ENCODE measurements at regions of chr12 and their contacts with region 1.

Region 1: DNA sequence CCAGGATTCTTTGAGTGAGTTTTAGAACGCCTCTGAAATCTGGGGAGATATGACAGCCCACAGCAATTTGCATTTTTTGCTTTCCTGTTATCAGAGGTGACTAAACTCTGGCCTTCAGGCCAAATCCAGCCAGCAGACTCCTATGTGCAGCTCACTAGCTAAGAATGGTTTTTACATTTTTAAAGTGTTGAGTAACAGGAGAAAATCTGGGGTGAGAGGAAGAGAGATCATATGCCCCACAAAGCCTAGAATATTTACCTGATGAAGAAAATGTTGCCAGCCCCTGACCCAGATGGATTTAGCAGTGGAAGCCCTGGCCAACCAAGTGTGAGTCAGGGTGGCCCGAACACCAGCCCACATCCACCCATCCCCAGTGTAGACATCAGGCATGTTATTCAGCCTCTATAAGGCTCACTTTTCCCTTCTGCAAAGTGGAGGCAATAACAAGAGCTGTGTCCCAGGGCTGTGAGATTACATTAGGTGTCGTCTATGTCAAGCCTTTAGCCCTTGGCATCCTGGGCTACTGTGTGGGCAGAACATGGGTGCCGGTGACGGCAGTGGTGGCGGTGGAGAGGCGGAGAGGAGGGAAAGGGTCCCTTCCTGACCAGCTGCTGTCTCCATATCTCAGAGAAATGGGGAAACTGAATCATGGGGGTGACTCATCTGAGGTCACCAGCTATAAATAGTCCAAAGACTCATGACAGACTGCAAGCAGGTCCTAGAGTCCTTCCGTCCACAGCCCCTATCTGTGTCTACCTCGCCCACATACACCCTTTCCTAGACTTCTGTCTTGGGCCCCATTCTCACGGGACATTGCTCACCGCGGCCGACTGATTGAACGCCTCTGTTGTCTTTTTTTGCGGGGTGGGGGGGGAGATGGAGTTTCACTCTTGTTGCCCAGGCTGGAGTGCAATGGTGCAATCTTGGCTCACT is 32.6 kb upstream of the CD9 start:
- DNase-seq: peak in 4 of 5 donors; percentile 42 to 88 (median 72)
- ATAC-seq: peak; percentile 63 to 90 (median 84)
- H3K4me3 ChIP-seq: peak overlapping the region in 1 of 12 donors; percentile 12
- H3K27ac ChIP-seq: peak overlapping the region; percentile 18 to 96 (median 74)
- H3K4me1 ChIP-seq: peaks cover 4 to 47% (median 24%) of the 10 kb centered on the region in 12 donors
- H3K27me3 ChIP-seq: no peaks in the 10 kb centered on the region
- CTCF ChIP-seq: no peak
- POLR2A ChIP-seq: no peak

Region 2: DNA sequence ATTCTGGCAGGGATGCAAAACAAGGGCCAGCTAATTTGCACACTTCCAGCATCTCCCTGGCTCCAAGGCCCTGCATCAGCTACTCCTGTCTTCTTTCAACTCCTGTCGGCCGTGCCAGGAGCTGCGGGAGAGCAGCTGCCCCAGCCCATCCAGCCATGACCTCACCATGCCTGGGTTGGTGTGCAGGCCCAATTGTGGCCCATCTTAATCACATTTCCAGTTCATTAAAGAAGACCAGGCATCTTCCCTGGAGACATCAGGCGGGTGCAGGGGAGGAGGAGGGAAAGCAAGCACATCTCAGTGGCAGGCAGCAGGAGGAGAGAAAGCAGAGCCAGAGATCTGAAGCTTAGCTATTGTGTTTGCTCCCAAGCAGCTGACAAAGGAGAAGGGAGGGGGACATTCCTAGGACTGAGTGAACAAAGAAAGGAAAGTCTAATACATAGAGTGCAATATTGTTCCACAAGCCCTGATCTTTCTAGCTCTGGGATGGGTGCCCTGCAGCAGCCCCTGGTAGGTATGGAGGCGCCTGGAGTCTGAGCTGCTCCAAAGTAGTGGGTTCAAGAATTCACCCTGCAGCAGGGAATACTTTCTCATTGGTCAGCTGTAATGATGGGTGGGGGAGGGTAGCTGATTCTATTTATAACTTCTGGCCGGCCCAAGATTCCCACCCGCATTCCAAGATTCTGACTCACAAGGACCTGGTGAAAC is 83.2 kb before region 1 on chr12:
- intact Hi-C with region 1: loop called in 3 of 10 experiments (anchors 5 to 10 kb)
- DNase-seq: no peak
- ATAC-seq: peak; percentile 49 to 65 (median 54)
- H3K4me3 ChIP-seq: no peak overlapping the region
- H3K27ac ChIP-seq: peak overlapping the region in 9 of 12 donors; percentile 47 to 82 (median 67)
- H3K4me1 ChIP-seq: peaks cover 0 to 96% (median 46%) of the 10 kb centered on the region in 12 donors
- H3K27me3 ChIP-seq: no peaks in the 10 kb centered on the region
- CTCF ChIP-seq: no peak
- POLR2A ChIP-seq: no peak

Region 3: DNA sequence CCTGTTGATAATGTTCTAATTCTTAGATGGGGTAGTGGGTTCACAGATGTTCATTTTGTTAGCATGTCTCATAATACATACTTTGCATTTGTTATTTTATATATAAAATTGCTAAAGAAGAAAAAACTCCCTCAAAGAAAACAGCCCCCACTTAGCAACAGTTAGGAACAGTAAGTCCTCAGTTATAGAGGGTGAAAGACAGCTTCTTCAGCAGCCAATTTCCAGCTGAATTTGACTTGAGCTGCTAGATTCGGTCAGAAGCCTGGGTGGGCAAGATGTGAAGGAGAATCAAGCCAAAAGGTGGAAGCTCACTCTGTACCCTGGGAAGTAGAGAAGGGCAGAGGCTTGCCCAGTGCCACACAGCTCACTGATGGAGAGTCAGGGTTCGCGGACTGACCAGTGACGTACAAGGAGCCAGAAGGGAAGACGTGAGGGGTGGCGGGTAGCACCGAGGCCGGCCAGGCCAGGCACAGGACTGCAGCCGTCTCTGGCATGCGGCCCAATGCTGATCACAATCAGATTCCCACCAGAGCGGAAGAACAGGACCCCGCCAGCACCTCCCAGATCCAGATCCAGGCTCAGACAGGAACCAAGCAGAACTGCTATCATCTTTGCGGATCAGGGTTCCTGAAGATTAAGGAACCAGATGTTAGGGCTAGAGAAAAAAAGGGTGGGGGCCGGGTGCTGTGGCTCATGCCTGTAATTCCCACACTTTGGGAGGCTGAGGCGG is 12.7 kb before region 1 on chr12:
- intact Hi-C with region 1: loop called in 1 of 10 experiments (anchors 2 kb)
- DNase-seq: peak; percentile 84 to 89 (median 87)
- ATAC-seq: peak; percentile 88 to 96 (median 94)
- H3K4me3 ChIP-seq: no peak overlapping the region
- H3K27ac ChIP-seq: peak overlapping the region; percentile 45 to 87 (median 78)
- H3K4me1 ChIP-seq: peaks cover 0 to 31% (median 6%) of the 10 kb centered on the region in 12 donors
- H3K27me3 ChIP-seq: peaks cover 0 to 4% (median 0%) of the 10 kb centered on the region in 9 donors
- CTCF ChIP-seq: no peak
- POLR2A ChIP-seq: no peak

Measured in heart left ventricle (tissue), 16 donors.